ENCODE measurements at regions of chr3 and their contacts with region 1.

Region 1: DNA sequence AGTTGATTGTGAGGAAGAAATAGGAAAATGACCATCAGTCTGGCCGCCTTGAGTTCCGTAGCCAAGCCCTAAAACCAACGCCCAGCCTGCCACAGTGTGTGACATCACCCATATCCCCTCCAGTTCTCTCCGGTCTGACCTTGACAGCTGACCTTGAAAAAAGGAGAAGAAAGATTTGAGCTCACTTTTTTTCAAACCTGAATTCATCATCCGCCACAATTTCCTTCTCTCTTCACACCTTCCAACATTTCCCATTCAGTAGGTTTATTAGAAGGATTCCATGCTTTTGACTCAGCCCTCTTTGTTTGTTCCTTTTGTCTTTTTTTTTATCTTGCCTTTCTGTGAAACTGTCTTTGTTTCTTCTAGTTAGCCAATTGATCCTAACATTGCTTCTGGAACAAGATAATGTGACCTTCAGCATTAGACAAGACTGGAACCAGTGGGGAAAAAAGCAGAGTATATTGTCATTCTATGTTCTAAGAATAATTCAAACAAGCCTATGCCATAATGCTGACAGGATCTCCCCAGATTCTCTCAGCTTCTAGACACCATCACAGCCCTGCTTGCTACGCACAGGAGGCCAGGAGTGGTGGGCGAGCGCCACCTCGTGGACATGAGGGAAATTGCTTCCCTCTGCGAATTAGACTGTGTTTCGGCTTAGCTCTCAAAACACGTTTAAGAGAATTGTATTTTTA is 283.1 kb downstream of the FGF12 start:
- DNase-seq: peak; percentile 69
- H3K4me3 ChIP-seq: no peak overlapping the region
- H3K27ac ChIP-seq: no peak overlapping the region
- H3K4me1 ChIP-seq: peaks cover 8% of the 10 kb centered on the region
- CTCF ChIP-seq: peak; percentile 100

Region 2: DNA sequence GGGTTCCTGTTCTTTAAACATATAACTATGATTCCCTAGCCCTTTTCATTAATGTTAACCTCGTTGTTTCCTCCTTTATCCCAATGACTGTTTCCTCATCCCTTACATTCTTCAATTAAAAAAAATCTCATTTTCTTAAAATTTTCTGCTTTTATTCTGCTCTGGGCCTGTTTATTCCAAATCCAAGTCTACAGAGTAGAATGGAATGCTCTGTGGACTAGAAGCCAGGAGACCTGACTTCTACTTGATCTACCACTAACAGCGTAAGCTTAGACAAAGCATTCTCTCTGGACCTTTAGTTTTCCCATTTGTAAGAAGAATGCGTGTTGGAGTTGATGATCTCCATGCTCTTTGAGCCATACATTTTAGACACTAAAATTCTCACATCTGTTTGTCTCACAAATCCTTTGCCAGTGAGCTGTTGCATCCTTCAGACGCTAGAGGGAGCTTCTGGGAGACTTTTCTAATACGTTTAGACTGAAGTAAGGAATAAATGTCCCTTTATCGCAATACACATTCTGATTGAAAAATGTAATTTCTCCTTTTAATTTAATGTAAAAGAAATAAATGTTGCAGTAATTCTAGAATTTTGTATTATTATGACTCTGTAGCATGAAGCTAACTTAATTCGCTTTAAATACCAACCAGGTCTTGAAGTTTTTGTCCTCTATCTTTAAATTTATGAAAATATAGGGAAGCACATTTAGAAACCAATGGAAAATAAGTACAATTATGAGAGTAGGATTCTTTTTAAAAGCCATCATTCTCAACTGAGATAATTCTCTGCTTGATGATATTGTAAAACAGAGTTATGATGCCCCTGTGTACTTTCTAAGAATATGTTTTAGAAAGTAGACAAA is 1560.0 kb before region 1 on chr3:
- CTCF ChIA-PET with region 1: no interaction called
- POLR2A ChIA-PET with region 1: no interaction called
- intact Hi-C with region 1: loop called (anchors 10 kb)
- DNase-seq: peak; percentile 67
- H3K4me3 ChIP-seq: no peak overlapping the region
- H3K27ac ChIP-seq: no peak overlapping the region
- H3K4me1 ChIP-seq: no peaks in the 10 kb centered on the region
- CTCF ChIP-seq: peak; percentile 99

Region 3: DNA sequence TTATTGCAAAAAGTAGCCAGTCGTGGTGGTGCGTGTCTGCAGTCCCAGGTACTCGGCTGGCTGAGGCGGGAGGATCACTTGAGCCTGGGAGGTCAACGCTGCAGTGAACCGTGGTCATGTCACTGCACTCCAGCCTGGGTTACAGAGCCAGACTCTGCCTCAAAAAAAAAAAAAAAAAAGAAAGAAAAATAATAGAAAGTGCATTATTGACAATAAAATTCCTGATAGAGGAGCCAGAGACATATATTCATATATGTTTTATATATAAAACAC is 1026.8 kb before region 1 on chr3:
- CTCF ChIA-PET with region 1: interaction called, 5 read pairs
- POLR2A ChIA-PET with region 1: interaction called, 3 read pairs
- intact Hi-C with region 1: loop called (anchors 1 kb)
- DNase-seq: no peak
- H3K4me3 ChIP-seq: no peak overlapping the region
- H3K27ac ChIP-seq: no peak overlapping the region
- H3K4me1 ChIP-seq: no peaks in the 10 kb centered on the region
- CTCF ChIP-seq: no peak

Region 4: GRCh38 chr3:192130534-192131132 is 313.6 kb before region 1 on chr3:
- CTCF ChIA-PET with region 1: no interaction called
- POLR2A ChIA-PET with region 1: interaction called, 3 read pairs
- intact Hi-C with region 1: loop called (anchors 2 kb)
- DNase-seq: peak; percentile 83
- H3K4me3 ChIP-seq: no peak overlapping the region
- H3K27ac ChIP-seq: peak overlapping the region; percentile 40
- H3K4me1 ChIP-seq: peaks cover 42% of the 10 kb centered on the region
- CTCF ChIP-seq: peak; percentile 96